A549 (cell line): ENCODE measurements at regions of chr2 and their contacts with region 1.

Region 1: DNA sequence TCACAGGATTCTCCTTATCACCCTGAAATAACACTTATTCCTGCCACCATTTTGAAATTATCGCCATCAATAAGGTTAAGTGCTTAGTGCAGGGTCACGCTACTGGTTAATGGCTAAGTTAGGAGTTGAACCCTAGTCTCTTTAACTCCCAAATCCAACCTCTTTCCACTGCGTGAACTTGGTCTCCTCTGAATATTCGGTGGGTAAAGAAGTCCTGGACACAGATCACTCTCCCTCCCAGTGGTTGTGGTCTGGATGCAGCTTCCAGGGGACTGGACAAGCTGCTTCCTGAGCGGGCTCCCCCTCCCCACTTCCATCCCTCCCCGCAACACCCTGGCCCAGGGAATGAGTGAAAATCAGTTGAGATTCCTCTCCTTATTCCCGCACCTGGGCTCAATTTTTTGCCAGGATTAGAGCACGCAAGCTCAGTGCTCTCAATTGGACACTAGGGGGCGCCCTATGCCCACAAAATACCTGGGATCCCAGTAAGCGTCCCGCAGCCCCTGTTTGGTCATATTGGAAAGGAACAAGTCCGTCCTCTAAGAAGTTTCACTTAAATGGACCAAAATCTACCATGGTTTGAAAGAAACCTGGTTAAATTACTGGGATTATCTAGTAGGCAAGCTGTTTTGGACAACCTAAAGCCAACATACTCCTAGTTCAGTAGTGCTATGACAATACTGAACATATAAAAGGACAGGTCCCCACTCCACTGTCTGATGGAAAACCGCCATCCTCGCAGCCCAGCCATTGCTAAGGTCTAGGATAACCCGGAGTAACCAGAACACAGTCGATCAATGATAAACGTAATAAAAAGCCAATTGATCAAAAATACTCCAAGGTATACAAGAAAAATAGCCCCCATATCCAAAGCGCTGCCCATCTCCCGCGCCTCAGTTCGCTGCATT is 40.4 kb downstream of the DHRS9 start:
- DNase-seq: peak; percentile 68 to 74
- ATAC-seq: peak; percentile 88 to 98; a peak in 5 of 6 replicates
- H3K4me3 ChIP-seq: no peak overlapping the region
- H3K27ac ChIP-seq: no peak overlapping the region
- H3K4me1 ChIP-seq: no peaks in the 10 kb centered on the region
- CTCF ChIP-seq: peak; percentile 87
- EP300 ChIP-seq: no peak
- POLR2A ChIP-seq: no peak
- RAD21 ChIP-seq: peak; percentile 91 to 92

Region 2: DNA sequence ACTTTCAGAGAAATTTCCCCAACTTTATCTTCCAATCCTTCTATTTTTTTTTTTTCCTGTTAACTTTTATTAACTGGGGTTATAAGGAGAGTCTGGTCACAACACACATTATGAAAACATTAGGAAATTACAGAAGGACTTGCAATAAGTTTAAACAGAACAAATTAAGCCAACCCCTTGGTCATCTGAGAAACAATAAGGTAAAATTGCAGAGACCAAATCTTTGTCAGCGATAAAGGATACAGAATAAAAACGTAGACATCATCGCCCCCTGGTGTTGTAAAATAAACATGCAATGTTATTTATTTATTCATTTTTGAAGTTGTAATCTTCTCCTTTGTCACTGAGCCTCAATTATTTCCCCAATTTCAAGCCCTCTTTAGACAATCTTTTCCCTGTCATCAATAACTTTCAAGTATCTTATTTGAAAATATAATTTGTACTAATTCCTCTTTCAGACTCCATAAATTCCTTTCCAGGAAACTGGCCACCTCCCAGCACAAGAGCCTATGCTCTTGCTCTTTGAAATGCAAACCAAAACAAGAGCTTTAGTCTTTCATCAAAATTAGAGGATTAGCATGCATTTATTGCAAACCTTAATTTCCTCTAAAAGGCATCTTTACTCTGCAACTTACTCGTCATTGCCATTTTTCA is 189.1 kb before region 1 on chr2:
- CTCF ChIA-PET with region 1: no interaction called
- POLR2A ChIA-PET with region 1: no interaction called
- DNase-seq: peak; percentile 6 to 41
- ATAC-seq: peak in 1 of 2 experiments; percentile 67; a peak in 3 of 6 replicates
- H3K4me3 ChIP-seq: no peak overlapping the region
- H3K27ac ChIP-seq: no peak overlapping the region
- H3K4me1 ChIP-seq: no peaks in the 10 kb centered on the region
- CTCF ChIP-seq: peak; percentile 70
- EP300 ChIP-seq: no peak
- POLR2A ChIP-seq: no peak
- RAD21 ChIP-seq: peak; percentile 79 to 82

Region 3: GRCh38 chr2:168971261-168971660 is 138.5 kb before region 1 on chr2:
- CTCF ChIA-PET with region 1: interaction called, 11 read pairs
- POLR2A ChIA-PET with region 1: no interaction called
- DNase-seq: no peak
- ATAC-seq: no peak
- H3K4me3 ChIP-seq: no peak overlapping the region
- H3K27ac ChIP-seq: no peak overlapping the region
- H3K4me1 ChIP-seq: no peaks in the 10 kb centered on the region
- CTCF ChIP-seq: no peak
- EP300 ChIP-seq: no peak
- POLR2A ChIP-seq: no peak
- RAD21 ChIP-seq: no peak

Region 4: DNA sequence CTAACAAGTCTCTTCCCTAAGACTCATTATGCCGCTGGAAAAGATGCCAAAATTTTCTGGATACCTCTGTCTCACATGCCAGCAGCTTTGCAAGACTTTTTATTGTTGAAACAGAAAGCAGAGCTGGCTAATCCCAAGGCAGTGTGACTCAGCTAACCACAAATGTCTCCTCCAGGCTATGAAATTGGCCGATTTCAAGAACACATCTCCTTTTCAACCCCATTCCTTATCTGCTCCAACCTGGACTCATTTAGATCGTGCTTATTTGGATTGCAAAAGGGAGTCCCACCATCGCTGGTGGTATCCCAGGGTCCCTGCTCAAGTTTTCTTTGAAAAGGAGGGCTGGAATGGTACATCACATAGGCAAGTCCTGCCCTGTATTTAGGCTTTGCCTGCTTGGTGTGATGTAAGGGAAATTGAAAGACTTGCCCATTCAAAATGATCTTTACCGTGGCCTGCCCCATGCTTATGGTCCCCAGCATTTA is 14.1 kb before region 1 on chr2:
- CTCF ChIA-PET with region 1: interaction called, 40 read pairs
- POLR2A ChIA-PET with region 1: no interaction called
- DNase-seq: peak in 1 of 2 experiments; percentile 30
- ATAC-seq: peak; percentile 72 to 80; a peak in 5 of 6 replicates
- H3K4me3 ChIP-seq: no peak overlapping the region
- H3K27ac ChIP-seq: peak overlapping the region; percentile 37 to 54; a peak in 5 of 6 replicates
- H3K4me1 ChIP-seq: peaks cover 31% of the 10 kb centered on the region
- CTCF ChIP-seq: no peak
- EP300 ChIP-seq: no peak
- POLR2A ChIP-seq: no peak
- RAD21 ChIP-seq: no peak

Region 5: GRCh38 chr2:169141713-169142352 is 32.1 kb after region 1 on chr2:
- CTCF ChIA-PET with region 1: interaction called, 78 read pairs
- POLR2A ChIA-PET with region 1: no interaction called
- DNase-seq: peak; percentile 46 to 64
- ATAC-seq: peak; percentile 85 to 97
- H3K4me3 ChIP-seq: no peak overlapping the region
- H3K27ac ChIP-seq: no peak overlapping the region
- H3K4me1 ChIP-seq: no peaks in the 10 kb centered on the region
- CTCF ChIP-seq: peak; percentile 67
- EP300 ChIP-seq: no peak
- POLR2A ChIP-seq: no peak
- RAD21 ChIP-seq: peak; percentile 53 to 59